ENCODE measurements at regions of chr3 and their contacts with region 1.

Region 1: GRCh38 chr3:128051837-128052594 is at the start of gene SEC61A1:
- DNase-seq: peak; percentile 94 to 97 (median 95)
- ATAC-seq: peak; percentile 97
- H3K4me3 ChIP-seq: peak within 1 kb of the TSS; percentile 82
- H3K4me3 Mint-ChIP-seq: peak within 1 kb of the TSS; percentile 90 to 98 (median 96)
- H3K27ac ChIP-seq: peak within 1 kb of the TSS; percentile 95
- H3K27ac Mint-ChIP-seq: peak within 1 kb of the TSS; percentile 87 to 99 (median 97)
- H3K4me1 ChIP-seq: peaks cover 28 to 37% of the 10 kb centered on the region in 2 donors
- H3K4me1 Mint-ChIP-seq: peaks cover 36 to 44% (median 43%) of the 10 kb centered on the region in 7 donors
- H3K27me3 ChIP-seq: no peaks in the 10 kb centered on the region
- H3K27me3 Mint-ChIP-seq: peaks cover 0 to 17% (median 1%) of the 10 kb centered on the region in 5 donors
- total RNA-seq, gene SEC61A1: 110 to 219 (median 132) TPM

Region 2: GRCh38 chr3:126475413-126476114 is 1576.5 kb before region 1 on chr3 and contains the start of gene ZXDC:
- CTCF ChIA-PET with region 1: no interaction called
- POLR2A ChIA-PET with region 1: no interaction called
- intact Hi-C with region 1: loop called in 1 of 2 experiments (anchors 2 kb)
- DNase-seq: peak; percentile 85 to 95 (median 90)
- ATAC-seq: peak; percentile 89
- H3K4me3 ChIP-seq: peak within 1 kb of the TSS; percentile 89
- H3K4me3 Mint-ChIP-seq: peak within 1 kb of the TSS; percentile 81 to 97 (median 92)
- H3K27ac ChIP-seq: peak within 1 kb of the TSS; percentile 87
- H3K27ac Mint-ChIP-seq: peak within 1 kb of the TSS; percentile 82 to 96 (median 92)
- H3K4me1 ChIP-seq: peaks cover 29 to 34% of the 10 kb centered on the region in 2 donors
- H3K4me1 Mint-ChIP-seq: peaks cover 34 to 52% (median 48%) of the 10 kb centered on the region in 7 donors
- H3K27me3 ChIP-seq: no peaks in the 10 kb centered on the region
- H3K27me3 Mint-ChIP-seq: peaks cover 0 to 4% (median 0%) of the 10 kb centered on the region in 5 donors
- total RNA-seq, gene ZXDC: 33.7 to 71.9 (median 67.6) TPM

Region 3: DNA sequence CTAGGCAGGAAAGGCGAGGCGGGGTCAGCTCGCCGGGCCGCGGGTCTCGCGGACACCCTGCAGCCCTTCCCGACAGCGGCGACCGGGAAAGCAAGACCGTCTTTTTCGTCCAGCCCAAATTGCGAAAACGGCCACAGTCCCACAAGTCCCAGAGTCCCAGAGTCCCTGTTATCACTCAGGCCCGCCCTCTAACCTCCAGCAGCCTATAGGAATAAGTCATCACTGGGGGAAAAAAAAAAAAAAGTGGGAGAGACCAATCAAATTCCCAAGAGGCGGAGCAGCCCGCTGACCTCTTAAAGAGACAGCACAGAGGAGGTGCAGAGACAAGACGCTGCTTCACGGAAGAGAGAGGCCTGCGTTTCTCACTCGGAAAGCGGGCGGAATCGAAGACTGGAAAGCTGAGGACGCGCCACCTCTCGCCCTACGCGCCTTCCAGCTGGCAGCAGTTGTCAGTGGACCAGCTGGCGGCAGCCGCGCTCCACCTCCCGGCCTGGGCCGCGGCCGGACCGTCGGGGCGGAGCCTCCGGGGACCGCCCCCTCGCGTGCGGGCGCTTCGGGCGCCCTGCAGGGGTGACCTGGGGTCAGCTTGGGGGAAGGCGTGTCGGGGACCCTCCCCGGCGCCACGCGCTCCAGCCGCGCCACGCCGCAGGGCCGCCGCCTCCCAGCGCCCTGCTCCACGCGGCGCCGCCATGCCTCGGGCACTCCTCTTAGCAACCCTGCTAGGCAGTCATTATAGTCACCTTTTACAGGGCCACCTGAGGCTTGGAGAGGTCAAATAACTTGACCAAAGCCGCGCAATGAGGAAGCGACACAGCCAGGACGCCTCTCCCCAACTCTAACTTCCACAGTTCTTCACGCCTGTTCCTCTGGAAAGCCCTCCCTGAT is 461.2 kb before region 1 on chr3 and contains the start of gene TPRA1:
- CTCF ChIA-PET with region 1: no interaction called
- POLR2A ChIA-PET with region 1: no interaction called
- intact Hi-C with region 1: loop called (anchors 1 to 2 kb)
- DNase-seq: peak; percentile 58 to 90 (median 85)
- ATAC-seq: peak; percentile 90
- H3K4me3 ChIP-seq: peak within 1 kb of the TSS; percentile 91
- H3K4me3 Mint-ChIP-seq: peak within 1 kb of the TSS; percentile 86 to 99 (median 96)
- H3K27ac ChIP-seq: peak within 1 kb of the TSS; percentile 80
- H3K27ac Mint-ChIP-seq: peak within 1 kb of the TSS; percentile 86 to 96 (median 94)
- H3K4me1 ChIP-seq: peaks cover 11 to 12% of the 10 kb centered on the region in 2 donors
- H3K4me1 Mint-ChIP-seq: peaks cover 14 to 51% (median 43%) of the 10 kb centered on the region in 7 donors
- H3K27me3 ChIP-seq: no peaks in the 10 kb centered on the region
- H3K27me3 Mint-ChIP-seq: no peaks in the 10 kb centered on the region
- total RNA-seq, gene TPRA1: 13.6 to 30.6 (median 24.5) TPM

Region 4: DNA sequence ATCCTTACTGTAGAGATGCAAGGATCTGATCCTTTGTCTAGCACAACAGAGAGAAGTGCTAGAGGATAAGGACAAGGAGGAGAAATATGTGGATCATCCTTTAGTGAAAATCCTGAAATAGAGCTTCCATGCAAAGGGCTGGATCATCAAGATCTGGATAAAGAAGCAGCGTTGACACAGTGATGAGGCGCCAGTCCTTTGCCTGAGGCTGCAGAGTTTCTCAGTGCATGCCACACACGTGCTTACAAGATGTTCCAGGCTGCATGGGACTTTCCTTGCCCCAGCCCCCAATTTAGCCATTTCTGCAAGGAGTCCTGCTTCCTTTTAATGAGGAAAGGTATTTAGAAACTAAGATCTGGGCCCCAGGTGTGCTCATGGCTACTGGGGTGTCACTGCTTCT is 386.4 kb before region 1 on chr3:
- CTCF ChIA-PET with region 1: no interaction called
- POLR2A ChIA-PET with region 1: no interaction called
- intact Hi-C with region 1: no loop called
- DNase-seq: no peak
- ATAC-seq: no peak
- H3K4me3 ChIP-seq: no peak overlapping the region
- H3K4me3 Mint-ChIP-seq: no peak overlapping the region
- H3K27ac ChIP-seq: no peak overlapping the region
- H3K27ac Mint-ChIP-seq: no peak overlapping the region
- H3K4me1 ChIP-seq: no peaks in the 10 kb centered on the region
- H3K4me1 Mint-ChIP-seq: no peaks in the 10 kb centered on the region
- H3K27me3 ChIP-seq: no peaks in the 10 kb centered on the region
- H3K27me3 Mint-ChIP-seq: peaks cover 0 to 6% (median 0%) of the 10 kb centered on the region in 5 donors

Region 5: GRCh38 chr3:128075516-128076482 is 23.8 kb after region 1 on chr3:
- CTCF ChIA-PET with region 1: interaction called, 5 read pairs
- POLR2A ChIA-PET with region 1: interaction called, 5 read pairs
- intact Hi-C with region 1: loop called (anchors 1 kb)
- DNase-seq: peak; percentile 73 to 93 (median 84)
- ATAC-seq: peak; percentile 95
- H3K4me3 ChIP-seq: peak overlapping the region; percentile 53
- H3K4me3 Mint-ChIP-seq: peak overlapping the region; percentile 55 to 82 (median 73)
- H3K27ac ChIP-seq: peak overlapping the region; percentile 42
- H3K27ac Mint-ChIP-seq: peak overlapping the region in 6 of 9 donors; percentile 51 to 84 (median 62)
- H3K4me1 ChIP-seq: peaks cover 0 to 9% of the 10 kb centered on the region in 2 donors
- H3K4me1 Mint-ChIP-seq: peaks cover 0 to 12% (median 7%) of the 10 kb centered on the region in 7 donors
- H3K27me3 ChIP-seq: no peaks in the 10 kb centered on the region
- H3K27me3 Mint-ChIP-seq: peaks cover 0 to 2% (median 0%) of the 10 kb centered on the region in 5 donors

Region 6: GRCh38 chr3:128207951-128208558 is 156.0 kb after region 1 on chr3:
- CTCF ChIA-PET with region 1: no interaction called
- POLR2A ChIA-PET with region 1: no interaction called
- intact Hi-C with region 1: no loop called
- DNase-seq: no peak
- ATAC-seq: no peak
- H3K4me3 ChIP-seq: no peak overlapping the region
- H3K4me3 Mint-ChIP-seq: no peak overlapping the region
- H3K27ac ChIP-seq: no peak overlapping the region
- H3K27ac Mint-ChIP-seq: no peak overlapping the region
- H3K4me1 ChIP-seq: no peaks in the 10 kb centered on the region
- H3K4me1 Mint-ChIP-seq: peaks cover 0 to 39% (median 36%) of the 10 kb centered on the region in 7 donors
- H3K27me3 ChIP-seq: no peaks in the 10 kb centered on the region
- H3K27me3 Mint-ChIP-seq: no peaks in the 10 kb centered on the region

Region 7: GRCh38 chr3:128680602-128681368 is 628.8 kb after region 1 on chr3:
- CTCF ChIA-PET with region 1: no interaction called
- POLR2A ChIA-PET with region 1: no interaction called
- intact Hi-C with region 1: loop called in 1 of 2 experiments (anchors 1 kb)
- DNase-seq: peak; percentile 94 to 98 (median 95)
- ATAC-seq: peak; percentile 95
- H3K4me3 ChIP-seq: peak overlapping the region; percentile 91
- H3K4me3 Mint-ChIP-seq: peak overlapping the region; percentile 84 to 98 (median 94)
- H3K27ac ChIP-seq: peak overlapping the region; percentile 92
- H3K27ac Mint-ChIP-seq: peak overlapping the region; percentile 95 to 100 (median 99)
- H3K4me1 ChIP-seq: peaks cover 11 to 14% of the 10 kb centered on the region in 2 donors
- H3K4me1 Mint-ChIP-seq: peaks cover 17 to 50% (median 38%) of the 10 kb centered on the region in 7 donors
- H3K27me3 ChIP-seq: no peaks in the 10 kb centered on the region
- H3K27me3 Mint-ChIP-seq: no peaks in the 10 kb centered on the region

Region 8: DNA sequence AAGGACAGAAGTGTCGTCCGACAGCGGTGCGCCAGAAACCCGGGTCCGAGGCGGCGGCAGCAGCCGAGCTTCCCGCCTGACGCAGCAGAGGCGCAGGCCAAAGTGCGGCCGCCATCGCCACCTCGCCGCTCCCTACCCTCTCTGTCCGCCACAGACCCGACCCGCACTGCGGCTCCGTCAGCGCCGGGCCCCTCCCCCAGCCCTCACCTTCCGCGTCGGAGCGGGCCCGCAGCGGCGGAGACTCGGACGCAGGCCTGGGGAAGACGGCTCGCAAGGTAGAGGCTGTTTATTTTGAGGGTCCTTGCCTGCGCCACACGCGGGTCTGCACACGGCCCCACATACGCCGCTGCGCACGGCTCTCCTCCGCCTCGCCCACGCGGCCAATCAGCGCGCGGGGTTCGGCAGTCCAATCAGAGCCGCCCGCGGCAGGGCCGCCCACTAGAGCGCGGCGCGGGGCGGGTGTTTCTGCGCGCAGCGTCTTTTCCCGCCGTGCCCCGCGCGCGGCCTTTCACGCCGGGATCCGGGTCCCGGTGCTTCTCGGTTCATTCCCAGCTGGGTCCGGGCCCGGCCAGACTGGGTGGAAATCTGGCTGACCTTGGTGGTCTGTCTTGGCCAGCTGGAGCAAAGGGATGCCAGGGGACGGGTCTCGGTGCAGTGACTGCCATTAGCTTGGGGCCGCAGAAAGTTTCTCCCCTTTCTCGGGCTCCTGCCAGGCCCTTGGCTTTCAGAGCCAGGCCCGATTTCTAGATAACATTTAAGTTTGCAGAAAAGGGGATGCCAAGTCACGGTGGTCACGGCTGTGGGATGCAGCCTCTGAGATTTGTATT is 1131.8 kb after region 1 on chr3 and contains the start of gene CNBP:
- CTCF ChIA-PET with region 1: no interaction called
- POLR2A ChIA-PET with region 1: no interaction called
- intact Hi-C with region 1: loop called in 1 of 2 experiments (anchors 10 kb)
- DNase-seq: peak; percentile 90 to 96 (median 94)
- ATAC-seq: peak; percentile 100
- H3K4me3 ChIP-seq: peak within 1 kb of the TSS; percentile 74
- H3K4me3 Mint-ChIP-seq: peak within 1 kb of the TSS; percentile 93 to 99 (median 96)
- H3K27ac ChIP-seq: peak within 1 kb of the TSS; percentile 100
- H3K27ac Mint-ChIP-seq: peak within 1 kb of the TSS; percentile 91 to 99 (median 97)
- H3K4me1 ChIP-seq: peaks cover 18 to 27% of the 10 kb centered on the region in 2 donors
- H3K4me1 Mint-ChIP-seq: peaks cover 32 to 48% (median 42%) of the 10 kb centered on the region in 7 donors
- H3K27me3 ChIP-seq: no peaks in the 10 kb centered on the region
- H3K27me3 Mint-ChIP-seq: no peaks in the 10 kb centered on the region
- total RNA-seq, gene CNBP: 259 to 366 (median 327) TPM